AG04449 (cell line): ENCODE measurements at regions of chr12 and their contacts with region 1.

Region 1: GRCh38 chr12:103573185-103573584 is 13.9 kb upstream of the STAB2 start:
- DNase-seq: no peak
- H3K4me3 ChIP-seq: no peak overlapping the region
- CTCF ChIP-seq: no peak

Region 2: GRCh38 chr12:103560604-103561573 is 12.3 kb before region 1 on chr12:
- CTCF ChIA-PET with region 1: interaction called, 16 read pairs
- POLR2A ChIA-PET with region 1: no interaction called
- DNase-seq: peak; percentile 95
- H3K4me3 ChIP-seq: no peak overlapping the region
- CTCF ChIP-seq: no peak

Region 3: GRCh38 chr12:103586132-103586531 is 12.9 kb after region 1 on chr12:
- CTCF ChIA-PET with region 1: interaction called, 14 read pairs
- POLR2A ChIA-PET with region 1: interaction called, 3 read pairs
- DNase-seq: no peak
- H3K4me3 ChIP-seq: no peak overlapping the region
- CTCF ChIP-seq: no peak

Region 4: GRCh38 chr12:103868215-103868614 is 295.0 kb after region 1 on chr12:
- CTCF ChIA-PET with region 1: interaction called, 28 read pairs
- POLR2A ChIA-PET with region 1: no interaction called
- DNase-seq: peak; percentile 33
- H3K4me3 ChIP-seq: no peak overlapping the region
- CTCF ChIP-seq: no peak

Region 5: GRCh38 chr12:103997286-103997900 is 424.2 kb after region 1 on chr12:
- CTCF ChIA-PET with region 1: no interaction called
- POLR2A ChIA-PET with region 1: no interaction called
- DNase-seq: no peak
- H3K4me3 ChIP-seq: no peak overlapping the region
- CTCF ChIP-seq: no peak